Posterior cingulate gyrus (tissue), 11 donors: ENCODE measurements at regions of chr18 and their contacts with region 1.

Region 1: DNA sequence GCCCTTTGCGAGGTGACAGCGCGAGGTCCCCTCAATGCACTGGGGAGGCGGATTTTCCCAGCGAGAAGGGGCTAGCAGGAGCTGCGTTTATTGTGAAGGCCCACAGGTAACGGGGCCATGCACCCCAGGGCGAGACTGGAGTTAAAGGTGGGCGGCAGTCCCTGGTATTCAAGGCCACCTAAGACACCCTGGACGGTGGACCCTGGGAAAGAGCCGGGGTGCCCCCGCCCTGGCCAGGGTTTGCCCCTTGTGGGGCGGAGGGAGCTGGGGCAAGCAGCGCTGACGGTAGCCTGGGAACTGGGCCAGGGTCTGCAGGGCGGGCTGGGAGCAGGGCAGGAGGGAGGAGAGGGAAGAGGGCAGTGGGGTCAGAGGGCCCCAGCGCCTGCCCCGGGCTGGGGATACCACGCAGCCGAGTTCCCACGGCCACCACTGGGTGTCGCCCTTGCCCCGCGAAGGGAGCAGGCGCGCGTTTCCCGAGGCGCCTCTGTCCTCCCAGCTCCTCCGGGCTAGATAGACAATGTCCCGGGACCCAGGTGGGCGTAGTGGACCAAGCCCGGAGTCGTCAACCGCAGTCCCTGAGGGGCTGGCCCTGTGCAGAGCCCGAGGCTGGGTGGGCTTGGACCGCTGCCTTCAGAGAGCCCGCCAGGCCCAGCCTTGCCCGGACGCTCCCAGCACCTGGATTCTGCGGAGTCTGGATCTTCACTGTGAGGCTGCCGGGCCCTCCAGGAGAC is 80.2 kb downstream of the SMAD4 start:
- DNase-seq: peak; percentile 27 to 96 (median 74)

Region 2: DNA sequence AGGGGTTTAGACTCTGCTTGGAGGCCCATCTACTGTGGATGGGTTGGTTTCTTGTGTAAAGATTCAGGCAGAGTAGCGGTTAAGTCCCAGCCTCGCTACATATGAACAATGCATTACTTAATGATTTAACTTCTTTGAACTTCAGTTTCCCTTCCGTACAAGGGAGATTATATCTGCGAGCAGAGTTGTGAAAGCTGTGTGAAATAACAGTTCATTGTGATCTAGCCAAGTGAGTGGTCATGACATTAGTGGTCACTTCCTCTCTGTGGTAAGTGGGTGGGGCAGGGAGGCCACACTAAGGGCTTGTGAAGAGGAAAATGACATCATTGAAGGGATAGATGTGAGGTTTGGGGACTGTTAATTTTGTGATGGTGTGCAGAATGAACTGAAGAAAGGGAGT is 101.3 kb after region 1 on chr18:
- intact Hi-C with region 1: no loop called
- DNase-seq: no peak

Region 3: DNA sequence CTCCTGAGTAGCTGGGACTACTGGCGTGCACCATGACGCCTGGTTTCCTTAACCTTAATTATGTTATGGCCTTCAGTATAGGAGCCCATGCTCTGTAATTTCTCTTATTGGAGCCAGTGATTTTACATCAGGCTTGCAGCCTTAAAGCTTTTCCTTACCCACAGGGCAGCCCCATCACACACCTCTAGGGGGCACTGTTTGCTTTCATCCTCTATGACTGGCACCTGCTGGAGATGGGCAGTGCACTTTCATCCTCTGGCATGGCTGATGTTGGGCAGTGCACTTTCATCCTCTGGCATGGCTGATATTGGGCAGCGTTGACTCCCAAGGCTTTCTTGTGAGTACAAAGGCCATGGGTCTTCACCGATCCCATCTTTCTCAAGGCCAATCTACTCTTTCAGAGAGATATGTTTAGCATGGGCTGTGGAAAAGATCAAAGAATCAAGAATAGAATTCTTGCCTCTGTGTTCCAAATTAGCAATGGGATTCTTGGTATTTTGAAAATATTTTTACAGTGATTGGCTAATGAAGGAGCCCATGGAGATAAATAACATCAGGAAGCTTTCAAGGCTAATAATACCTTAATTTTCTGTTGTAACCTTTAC is 167.9 kb after region 1 on chr18:
- intact Hi-C with region 1: loop called (anchors 5 kb)
- DNase-seq: peak in 8 of 10 donors; percentile 18 to 90 (median 64)

Region 4: DNA sequence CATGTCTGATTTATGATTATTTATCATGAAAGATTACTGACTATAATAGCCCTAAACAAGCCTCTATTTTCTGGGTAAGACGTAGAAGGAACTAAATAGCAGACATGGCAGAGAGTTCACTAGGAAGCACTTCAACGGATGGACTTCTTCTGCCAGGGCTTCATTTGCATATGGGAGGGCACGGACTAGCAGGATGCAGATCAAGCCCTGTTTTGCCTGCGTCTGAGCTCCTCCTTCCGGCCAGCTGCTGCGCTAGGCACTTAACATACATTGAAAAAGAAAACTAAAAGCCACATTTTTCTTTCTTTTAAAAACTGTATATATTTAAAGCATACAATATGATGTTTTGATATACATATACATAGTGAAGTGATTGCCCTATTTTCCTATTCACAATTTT is 427.2 kb after region 1 on chr18:
- intact Hi-C with region 1: loop called (anchors 2 kb)
- DNase-seq: peak; percentile 18 to 94 (median 53)